HEK293T (cell line): ENCODE measurements at regions of chr11 and their contacts with region 1.

Region 1: DNA sequence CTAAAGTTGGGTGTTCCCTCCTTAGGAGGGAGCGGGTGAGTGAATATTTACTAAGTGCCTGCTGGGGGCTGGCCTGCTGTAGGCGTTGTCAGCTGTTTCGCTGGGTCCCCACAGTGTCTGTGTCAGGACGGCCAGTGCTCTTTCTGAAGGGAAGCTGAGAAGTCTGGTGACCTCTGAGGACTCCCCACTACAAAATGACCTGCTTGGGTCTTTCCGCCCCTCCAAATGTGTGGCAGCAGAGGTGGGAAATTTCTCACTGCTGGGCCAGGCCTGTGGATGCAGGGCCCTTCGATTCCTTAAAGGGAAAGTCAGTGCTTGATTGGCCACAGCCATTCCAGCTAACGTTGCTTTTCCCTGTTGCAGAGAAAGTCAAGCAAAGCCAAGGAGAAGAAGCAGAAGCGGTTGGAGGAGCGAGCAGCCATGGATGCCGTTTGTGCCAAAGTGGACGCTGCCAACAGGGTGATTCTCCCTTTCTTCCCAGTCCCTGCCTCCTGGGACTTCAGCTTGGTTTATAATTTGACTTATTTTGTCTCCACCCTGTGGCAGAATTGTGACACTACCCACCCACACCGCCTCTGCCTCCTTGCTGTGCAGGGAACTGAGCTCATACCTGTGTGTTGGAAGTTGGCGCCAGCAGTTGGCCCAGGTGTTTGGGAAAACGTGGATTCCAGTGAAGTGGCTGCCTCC is 6.8 kb downstream of the NAA40 start:
- DNase-seq: peak; percentile 71

Region 2: GRCh38 chr11:63838678-63839507 is 106.7 kb before region 1 on chr11 and contains the start of gene MARK2:
- CTCF ChIA-PET with region 1: interaction called, 17 read pairs
- POLR2A ChIA-PET with region 1: interaction called, 3 read pairs
- DNase-seq: peak; percentile 99

Region 3: DNA sequence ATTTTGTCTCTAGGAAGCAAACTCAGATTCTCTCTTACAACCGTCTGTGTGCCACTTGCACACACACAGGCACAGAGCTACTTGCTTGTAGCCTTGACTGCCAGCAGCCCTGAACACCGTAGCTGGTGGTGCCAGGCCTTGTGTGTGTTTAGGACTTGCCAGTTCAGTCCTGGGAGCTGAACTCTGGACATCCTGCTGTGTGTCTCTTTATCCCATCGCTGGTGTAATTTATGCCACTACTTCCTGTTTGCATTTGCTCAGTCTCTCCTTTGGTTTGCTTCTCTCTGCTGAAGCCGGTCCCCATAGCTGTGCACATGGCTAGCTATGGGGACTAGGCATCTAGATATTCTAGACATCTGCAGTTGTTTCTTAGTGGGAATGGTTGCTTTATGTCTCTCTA is 82.7 kb before region 1 on chr11:
- CTCF ChIA-PET with region 1: no interaction called
- POLR2A ChIA-PET with region 1: no interaction called
- DNase-seq: no peak

Region 4: DNA sequence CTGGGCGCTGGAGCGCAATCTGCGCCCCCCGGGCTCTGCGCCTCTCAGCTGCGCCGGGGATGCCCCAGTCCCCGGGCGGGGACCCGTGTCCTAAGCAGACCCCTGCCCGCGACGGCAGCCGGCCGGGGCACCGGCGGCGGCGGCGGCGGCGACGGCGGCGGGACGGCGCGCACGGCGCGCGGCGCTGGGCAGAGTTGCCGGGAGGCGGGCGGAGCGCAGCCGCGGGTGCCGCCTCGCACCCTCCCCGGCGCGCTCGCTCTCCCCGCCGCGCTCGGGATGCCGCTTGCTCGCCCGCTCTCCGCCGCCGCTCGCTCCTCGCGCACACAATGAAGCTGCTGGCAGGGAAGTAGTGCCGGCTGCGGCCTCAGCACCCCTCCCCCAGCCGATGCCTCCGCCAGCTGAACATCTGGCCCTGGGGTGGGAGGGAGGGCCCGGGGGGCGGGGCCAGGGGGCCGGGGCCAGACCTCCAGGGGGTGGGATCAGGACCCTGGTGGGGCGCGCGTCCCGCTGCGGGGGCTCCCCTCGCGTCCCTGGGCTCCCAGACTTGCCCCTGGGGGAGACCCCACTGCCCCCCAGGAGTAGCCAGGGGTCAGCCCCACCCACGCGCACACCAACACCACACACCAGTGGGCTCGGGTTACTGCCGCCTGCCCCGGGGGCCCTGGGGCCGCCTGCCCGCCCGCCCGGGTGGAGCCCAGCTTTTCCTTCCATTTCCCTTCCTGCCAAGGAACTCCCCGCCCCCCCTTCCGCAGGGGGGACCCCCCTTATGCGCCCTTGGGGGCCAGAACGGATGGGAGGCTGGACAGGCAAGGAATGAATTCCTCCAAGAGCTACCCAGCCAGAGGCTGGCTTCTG is 28.6 kb before region 1 on chr11 and contains the start of gene RCOR2:
- CTCF ChIA-PET with region 1: interaction called, 9 read pairs
- POLR2A ChIA-PET with region 1: interaction called, 10 read pairs
- DNase-seq: peak; percentile 85

Region 5: GRCh38 chr11:63961608-63962412 is 16.2 kb after region 1 on chr11:
- CTCF ChIA-PET with region 1: interaction called, 10 read pairs
- POLR2A ChIA-PET with region 1: interaction called, 4 read pairs
- DNase-seq: no peak